Gastrocnemius medialis (tissue), 4 donors: ENCODE measurements at regions of chr5 and their contacts with region 1.

Region 1: GRCh38 chr5:150022163-150022540 is 21.6 kb downstream of the HMGXB3 start:
- DNase-seq: no peak
- ATAC-seq: peak; percentile 70 to 82
- H3K4me3 ChIP-seq: peak overlapping the region in 1 of 4 donors; percentile 17
- H3K27ac ChIP-seq: peak overlapping the region; percentile 77 to 82 (median 80)
- H3K4me1 ChIP-seq: peaks cover 31 to 48% of the 10 kb centered on the region in 2 donors
- H3K27me3 ChIP-seq: no peaks in the 10 kb centered on the region
- CTCF ChIP-seq: no peak
- POLR2A ChIP-seq: no peak

Region 2: DNA sequence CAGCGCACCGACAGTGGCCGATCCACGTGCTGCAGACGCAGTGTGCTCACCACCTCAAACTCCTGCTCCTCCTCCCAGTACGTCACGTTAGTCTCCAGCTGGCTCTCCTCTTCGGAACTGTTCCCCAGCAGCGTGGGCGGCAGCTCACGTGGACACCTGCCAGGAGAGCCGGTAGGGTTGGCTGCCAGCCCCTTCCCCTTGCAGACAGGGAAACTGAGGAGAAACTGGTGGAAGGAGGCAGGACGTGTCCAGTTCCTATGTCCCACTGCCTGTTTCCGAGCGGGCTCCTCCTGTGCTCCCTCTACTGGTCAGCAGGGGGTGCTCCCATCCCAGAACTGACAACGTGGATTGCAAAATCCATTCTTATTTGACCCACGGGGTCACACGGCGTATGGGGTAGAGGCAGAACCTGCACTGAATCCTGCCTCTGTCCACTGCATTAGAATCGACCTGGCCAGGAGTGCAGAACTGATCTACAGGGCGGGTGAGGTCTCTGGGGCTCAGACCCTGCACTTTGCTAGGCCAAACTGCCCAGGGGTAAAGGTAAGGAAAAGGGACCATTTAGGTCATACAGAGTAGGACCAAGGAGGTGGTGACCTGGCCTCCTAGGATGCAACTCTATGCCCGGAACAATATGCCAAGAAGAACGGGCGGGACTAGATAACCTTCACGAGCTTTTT is 107.8 kb after region 1 on chr5:
- in situ Hi-C with region 1: no loop called
- intact Hi-C with region 1: loop called (anchors 5 kb)
- DNase-seq: peak; percentile 44 to 70
- ATAC-seq: peak; percentile 67 to 91
- H3K4me3 ChIP-seq: peak overlapping the region; percentile 17 to 49 (median 32)
- H3K27ac ChIP-seq: peak overlapping the region in 3 of 4 donors; percentile 25 to 76 (median 30)
- H3K4me1 ChIP-seq: peaks cover 0 to 10% of the 10 kb centered on the region in 2 donors
- H3K27me3 ChIP-seq: no peaks in the 10 kb centered on the region
- CTCF ChIP-seq: peak; percentile 84 to 93 (median 87)
- POLR2A ChIP-seq: no peak